Heart right ventricle (tissue), 16 donors: ENCODE measurements at regions of chr4 and their contacts with region 1.

Region 1: GRCh38 chr4:88697588-88698329 is at the start of gene NAP1L5:
- DNase-seq: peak; percentile 67 to 70
- ATAC-seq: peak; percentile 87 to 94 (median 92)
- H3K4me3 ChIP-seq: peak within 1 kb of the TSS; percentile 29 to 73 (median 66)
- H3K27ac ChIP-seq: peak within 1 kb of the TSS; percentile 47 to 84 (median 76)
- H3K4me1 ChIP-seq: peaks cover 0 to 22% (median 6%) of the 10 kb centered on the region in 9 donors
- H3K27me3 ChIP-seq: no peaks in the 10 kb centered on the region
- CTCF ChIP-seq: no peak
- total RNA-seq, gene NAP1L5: 2.6 to 7.9 (median 6.1) TPM

Region 2: DNA sequence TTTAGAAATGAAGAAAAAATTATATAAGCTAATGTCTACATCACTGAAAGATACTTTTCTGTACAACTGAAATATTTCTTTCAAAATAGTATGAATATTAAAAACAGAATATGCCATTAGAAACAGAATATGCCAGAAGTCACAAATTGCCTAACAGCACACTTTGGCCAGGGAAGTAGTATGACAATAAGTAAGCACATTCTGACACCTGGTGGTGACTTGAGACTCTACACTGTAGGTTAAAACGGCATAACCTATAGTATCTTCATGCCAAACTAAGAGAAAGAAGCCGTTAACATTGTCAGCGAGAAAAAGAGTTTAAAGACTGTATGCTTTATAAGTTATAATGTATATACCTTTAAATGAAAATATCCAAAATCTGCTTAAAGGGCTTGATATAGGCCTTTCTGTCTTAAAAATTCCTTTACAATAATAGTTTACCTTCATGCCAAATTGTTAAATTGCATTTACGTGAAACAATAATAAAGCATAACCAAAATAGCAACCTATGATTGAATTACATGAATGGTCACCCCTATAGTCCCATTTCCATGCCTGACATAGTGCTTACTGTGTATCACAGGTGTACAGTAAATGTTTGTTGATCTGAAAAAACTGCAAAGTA is 326.4 kb after region 1 on chr4:
- intact Hi-C with region 1: loop called in 3 of 10 experiments (anchors 5 to 10 kb)
- DNase-seq: peak in 1 of 2 donors; percentile 68
- ATAC-seq: peak; percentile 78 to 97 (median 95)
- H3K4me3 ChIP-seq: no peak overlapping the region
- H3K27ac ChIP-seq: no peak overlapping the region
- H3K4me1 ChIP-seq: peaks cover 0 to 23% (median 7%) of the 10 kb centered on the region in 9 donors
- H3K27me3 ChIP-seq: no peaks in the 10 kb centered on the region
- CTCF ChIP-seq: peak; percentile 57 to 92 (median 86)